PC-3 (cell line): ENCODE measurements at regions of chr1 and their contacts with region 1.

Region 1: DNA sequence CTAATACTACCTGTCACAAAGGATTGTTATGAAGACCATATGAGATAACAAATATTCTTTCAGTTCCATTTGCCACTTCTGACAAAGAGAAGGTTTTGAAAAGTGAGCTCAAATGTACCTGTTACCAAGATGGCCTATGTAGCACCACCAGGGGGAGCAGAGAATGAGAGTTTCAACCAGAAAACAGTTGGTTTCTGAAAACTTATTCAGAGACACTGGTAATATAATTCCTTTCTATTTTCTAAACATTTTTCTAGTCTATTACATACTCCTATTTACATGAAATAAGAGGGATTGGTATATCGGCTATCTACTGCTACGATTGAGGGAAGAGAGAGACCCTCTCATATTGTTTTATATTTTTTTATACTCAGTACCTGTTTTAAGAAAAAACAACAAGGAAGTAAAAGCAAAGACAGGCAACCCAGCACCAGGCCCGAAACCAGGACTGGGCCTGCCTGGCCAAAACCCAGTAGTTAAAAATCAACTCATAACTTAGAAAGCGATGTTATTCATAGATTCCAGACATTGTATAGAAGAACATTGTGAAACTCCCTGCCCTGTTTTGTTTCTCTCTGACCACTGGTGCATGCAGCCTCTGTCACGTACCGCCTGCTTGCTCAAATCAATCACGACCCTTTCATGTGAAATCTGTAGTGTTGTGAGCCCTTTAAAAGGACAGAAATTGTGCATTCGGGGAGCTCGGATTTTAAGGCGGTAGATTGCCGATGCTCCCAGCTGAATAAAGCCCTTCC is 48.3 kb downstream of the IL23R start:
- DNase-seq: peak; percentile 68
- ATAC-seq: peak; percentile 60
- H3K4me3 ChIP-seq: no peak overlapping the region
- H3K27ac ChIP-seq: no peak overlapping the region
- H3K4me1 ChIP-seq: no peaks in the 10 kb centered on the region
- H3K27me3 ChIP-seq: no peaks in the 10 kb centered on the region
- CTCF ChIP-seq: peak; percentile 79

Region 2: DNA sequence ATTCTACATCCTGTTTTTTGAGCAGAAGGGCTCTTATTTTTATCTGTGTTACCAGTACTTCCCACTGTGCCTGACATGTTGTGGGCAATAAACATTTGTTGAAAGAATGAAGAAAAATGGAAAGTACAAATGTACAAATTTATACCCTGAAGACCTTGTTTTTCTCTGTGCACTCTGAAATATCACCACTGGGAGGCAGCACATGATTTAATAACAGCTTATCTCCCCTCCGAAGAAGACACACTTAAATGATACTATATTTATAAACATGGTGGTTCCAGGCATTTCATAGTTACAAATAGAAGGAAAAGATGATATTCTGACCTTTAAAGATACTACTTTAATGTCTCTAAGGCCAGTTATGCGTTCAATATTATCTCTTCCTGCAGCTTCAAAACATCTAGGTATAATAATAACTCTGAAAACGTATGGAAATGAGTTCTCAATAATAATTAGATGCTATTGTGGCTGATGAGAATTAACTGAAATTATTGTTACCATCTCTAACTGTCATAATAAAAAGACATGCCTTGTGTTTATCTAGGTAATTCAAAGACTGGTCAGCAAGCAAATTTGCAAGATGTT is 449.5 kb before region 1 on chr1:
- CTCF ChIA-PET with region 1: interaction called, 3 read pairs
- POLR2A ChIA-PET with region 1: no interaction called
- intact Hi-C with region 1: loop called (anchors 1 kb)
- DNase-seq: peak; percentile 65
- ATAC-seq: peak; percentile 66
- H3K4me3 ChIP-seq: no peak overlapping the region
- H3K27ac ChIP-seq: no peak overlapping the region
- H3K4me1 ChIP-seq: no peaks in the 10 kb centered on the region
- H3K27me3 ChIP-seq: no peaks in the 10 kb centered on the region
- CTCF ChIP-seq: peak; percentile 92

Region 3: DNA sequence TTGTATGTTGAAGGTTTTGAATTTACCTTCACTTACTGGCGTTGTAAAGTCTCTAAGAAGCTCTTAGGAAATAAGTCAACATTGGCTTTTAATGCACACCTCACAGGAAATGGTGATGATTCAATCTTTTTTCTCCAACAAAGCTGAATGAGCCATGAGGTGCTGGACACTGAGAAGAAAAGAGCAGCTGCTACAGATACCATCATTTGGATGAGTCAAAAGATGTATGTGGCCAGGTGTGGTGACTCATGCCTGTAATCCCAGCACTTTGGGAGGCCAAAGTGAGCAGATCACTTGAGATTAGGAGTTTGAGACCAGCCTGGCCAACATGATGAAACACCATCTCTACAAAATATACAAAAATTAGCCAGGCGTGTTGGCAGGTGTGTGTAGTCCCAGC is 51.6 kb before region 1 on chr1:
- CTCF ChIA-PET with region 1: interaction called, 15 read pairs
- POLR2A ChIA-PET with region 1: no interaction called
- intact Hi-C with region 1: no loop called
- DNase-seq: peak; percentile 97
- ATAC-seq: peak; percentile 97
- H3K4me3 ChIP-seq: no peak overlapping the region
- H3K27ac ChIP-seq: peak overlapping the region; percentile 92
- H3K4me1 ChIP-seq: peaks cover 16% of the 10 kb centered on the region
- H3K27me3 ChIP-seq: no peaks in the 10 kb centered on the region
- CTCF ChIP-seq: no peak

Region 4: GRCh38 chr1:67561704-67562113 is 347.1 kb after region 1 on chr1:
- CTCF ChIA-PET with region 1: no interaction called
- POLR2A ChIA-PET with region 1: no interaction called
- intact Hi-C with region 1: no loop called
- DNase-seq: peak; percentile 92
- ATAC-seq: peak; percentile 90
- H3K4me3 ChIP-seq: no peak overlapping the region
- H3K27ac ChIP-seq: 0 out of 2 replicates have a peak overlapping the region, but pooled peaks have one; percentile 7
- H3K4me1 ChIP-seq: peaks cover 18% of the 10 kb centered on the region
- H3K27me3 ChIP-seq: no peaks in the 10 kb centered on the region
- CTCF ChIP-seq: peak; percentile 93